Panc1 (cell line): ENCODE measurements at regions of chr15 and their contacts with region 1.

Region 1: GRCh38 chr15:59104912-59105732 is at the start of gene CCNB2:
- DNase-seq: peak; percentile 79
- ATAC-seq: peak; percentile 99
- H3K4me3 ChIP-seq: peak within 1 kb of the TSS; percentile 66 to 92
- H3K27ac ChIP-seq: peak within 1 kb of the TSS; percentile 88
- H3K4me1 ChIP-seq: peaks cover 9% of the 10 kb centered on the region; the same call in 1 of the 2 replicates
- H3K27me3 ChIP-seq: no peaks in the 10 kb centered on the region
- CTCF ChIP-seq: no peak
- total RNA-seq, gene CCNB2: 67.6 TPM

Region 2: GRCh38 chr15:58909616-58910015 is 195.5 kb before region 1 on chr15:
- CTCF ChIA-PET with region 1: no interaction called
- POLR2A ChIA-PET with region 1: no interaction called
- in situ Hi-C with region 1: no loop called
- intact Hi-C with region 1: no loop called
- DNase-seq: no peak
- ATAC-seq: 0 out of 2 replicates have a peak, but pooled peaks have one; percentile 48
- H3K4me3 ChIP-seq: no peak overlapping the region
- H3K27ac ChIP-seq: no peak overlapping the region
- H3K4me1 ChIP-seq: no peaks in the 10 kb centered on the region
- H3K27me3 ChIP-seq: no peaks in the 10 kb centered on the region
- CTCF ChIP-seq: no peak

Region 3: DNA sequence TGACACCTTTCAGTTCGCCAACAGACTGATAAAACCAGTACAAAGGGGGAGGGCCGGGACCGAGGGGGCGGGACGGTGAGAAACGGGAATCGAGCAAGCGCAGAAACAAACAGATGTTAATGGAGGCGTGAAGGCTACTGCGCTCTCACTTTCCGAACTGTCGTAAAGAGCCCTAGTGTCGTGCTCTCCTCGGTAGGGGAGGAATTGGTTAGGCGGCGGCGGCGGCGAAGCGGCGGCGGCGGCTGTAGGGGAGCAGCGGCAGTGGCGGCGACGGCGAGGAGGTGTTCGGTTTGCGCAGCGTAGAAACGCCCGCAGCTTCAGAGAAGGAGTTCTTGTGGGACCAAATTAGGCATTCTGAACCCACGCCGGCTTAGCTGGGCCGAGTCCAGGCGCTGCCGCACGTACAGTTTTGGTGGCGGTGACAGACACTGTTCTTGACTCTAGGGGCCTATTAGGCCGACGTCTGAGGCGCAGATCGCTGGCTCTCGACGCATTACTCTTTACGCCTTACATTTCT is 117.6 kb before region 1 on chr15 and contains the start of gene RNF111:
- CTCF ChIA-PET with region 1: no interaction called
- POLR2A ChIA-PET with region 1: no interaction called
- in situ Hi-C with region 1: no loop called
- intact Hi-C with region 1: loop called (anchors 10 kb)
- DNase-seq: peak; percentile 87
- ATAC-seq: peak; percentile 96
- H3K4me3 ChIP-seq: peak within 1 kb of the TSS; percentile 69 to 96
- H3K27ac ChIP-seq: peak within 1 kb of the TSS; percentile 91
- H3K4me1 ChIP-seq: peaks cover 10% of the 10 kb centered on the region
- H3K27me3 ChIP-seq: no peaks in the 10 kb centered on the region
- CTCF ChIP-seq: no peak
- total RNA-seq, gene RNF111: 37.2 TPM